ENCODE measurements at regions of chr7 and their contacts with region 1.

Region 1: GRCh38 chr7:95690367-95690947 is 81.9 kb upstream of the DYNC1I1 start:
- DNase-seq: peak; percentile 68
- H3K4me3 Mint-ChIP-seq: peak overlapping the region; percentile 13
- H3K27ac Mint-ChIP-seq: peak overlapping the region; percentile 46
- H3K4me1 Mint-ChIP-seq: peaks cover 22% of the 10 kb centered on the region
- H3K27me3 Mint-ChIP-seq: peaks cover 11% of the 10 kb centered on the region
- CTCF ChIP-seq: peak; percentile 69

Region 2: GRCh38 chr7:94442639-94443038 is 1247.8 kb before region 1 on chr7:
- CTCF ChIA-PET with region 1: interaction called, 10 read pairs
- POLR2A ChIA-PET with region 1: no interaction called
- intact Hi-C with region 1: loop called (anchors 5 kb)
- DNase-seq: no peak
- H3K4me3 Mint-ChIP-seq: no peak overlapping the region
- H3K27ac Mint-ChIP-seq: no peak overlapping the region
- H3K4me1 Mint-ChIP-seq: no peaks in the 10 kb centered on the region
- H3K27me3 Mint-ChIP-seq: peaks cover 15% of the 10 kb centered on the region
- CTCF ChIP-seq: no peak

Region 3: GRCh38 chr7:95491634-95492320 is 198.7 kb before region 1 on chr7:
- CTCF ChIA-PET with region 1: interaction called, 72 read pairs
- POLR2A ChIA-PET with region 1: interaction called, 3 read pairs
- intact Hi-C with region 1: no loop called
- DNase-seq: peak; percentile 96
- H3K4me3 Mint-ChIP-seq: no peak overlapping the region
- H3K27ac Mint-ChIP-seq: peak overlapping the region; percentile 23
- H3K4me1 Mint-ChIP-seq: peaks cover 24% of the 10 kb centered on the region
- H3K27me3 Mint-ChIP-seq: no peaks in the 10 kb centered on the region
- CTCF ChIP-seq: no peak

Region 4: DNA sequence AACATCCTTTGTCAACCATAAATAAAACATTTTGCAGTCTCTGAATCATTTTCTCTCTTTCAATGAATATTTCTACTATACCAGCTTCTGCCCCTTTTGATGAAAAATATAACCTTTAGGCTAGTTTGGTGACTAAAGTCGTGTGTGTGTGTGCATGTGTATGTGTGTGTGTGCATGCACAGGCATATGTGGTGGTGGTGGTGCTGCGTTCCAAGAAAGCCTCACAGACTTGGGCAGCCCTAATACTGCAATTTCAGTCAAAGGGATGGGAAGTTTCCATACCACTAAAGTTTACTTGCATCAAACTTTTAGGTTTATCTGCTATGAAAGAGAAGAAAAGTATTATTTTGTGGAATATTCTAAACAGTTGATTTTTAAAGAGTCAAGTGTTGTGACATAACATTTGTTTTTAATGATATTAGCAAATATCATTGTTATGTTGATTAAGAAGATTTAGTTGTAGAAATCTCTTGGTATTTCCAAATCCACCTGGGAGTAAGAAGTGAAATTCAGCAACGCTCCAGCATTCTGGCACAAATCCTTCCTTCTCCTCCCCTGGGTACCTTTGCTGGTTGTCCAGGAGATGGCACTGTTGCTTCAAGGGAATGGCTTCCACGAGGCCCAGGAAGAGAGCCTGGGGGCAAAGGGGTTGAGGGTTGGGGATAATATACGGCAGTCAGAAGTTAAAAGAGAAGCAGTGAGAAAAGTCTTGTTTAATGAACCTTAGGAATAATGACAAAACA is 163.3 kb before region 1 on chr7:
- CTCF ChIA-PET with region 1: interaction called, 1,114 read pairs
- POLR2A ChIA-PET with region 1: interaction called, 54 read pairs
- intact Hi-C with region 1: loop called (anchors 1 kb)
- DNase-seq: peak; percentile 83
- H3K4me3 Mint-ChIP-seq: no peak overlapping the region
- H3K27ac Mint-ChIP-seq: no peak overlapping the region
- H3K4me1 Mint-ChIP-seq: peaks cover 6% of the 10 kb centered on the region
- H3K27me3 Mint-ChIP-seq: peaks cover 38% of the 10 kb centered on the region
- CTCF ChIP-seq: peak; percentile 80

Region 5: DNA sequence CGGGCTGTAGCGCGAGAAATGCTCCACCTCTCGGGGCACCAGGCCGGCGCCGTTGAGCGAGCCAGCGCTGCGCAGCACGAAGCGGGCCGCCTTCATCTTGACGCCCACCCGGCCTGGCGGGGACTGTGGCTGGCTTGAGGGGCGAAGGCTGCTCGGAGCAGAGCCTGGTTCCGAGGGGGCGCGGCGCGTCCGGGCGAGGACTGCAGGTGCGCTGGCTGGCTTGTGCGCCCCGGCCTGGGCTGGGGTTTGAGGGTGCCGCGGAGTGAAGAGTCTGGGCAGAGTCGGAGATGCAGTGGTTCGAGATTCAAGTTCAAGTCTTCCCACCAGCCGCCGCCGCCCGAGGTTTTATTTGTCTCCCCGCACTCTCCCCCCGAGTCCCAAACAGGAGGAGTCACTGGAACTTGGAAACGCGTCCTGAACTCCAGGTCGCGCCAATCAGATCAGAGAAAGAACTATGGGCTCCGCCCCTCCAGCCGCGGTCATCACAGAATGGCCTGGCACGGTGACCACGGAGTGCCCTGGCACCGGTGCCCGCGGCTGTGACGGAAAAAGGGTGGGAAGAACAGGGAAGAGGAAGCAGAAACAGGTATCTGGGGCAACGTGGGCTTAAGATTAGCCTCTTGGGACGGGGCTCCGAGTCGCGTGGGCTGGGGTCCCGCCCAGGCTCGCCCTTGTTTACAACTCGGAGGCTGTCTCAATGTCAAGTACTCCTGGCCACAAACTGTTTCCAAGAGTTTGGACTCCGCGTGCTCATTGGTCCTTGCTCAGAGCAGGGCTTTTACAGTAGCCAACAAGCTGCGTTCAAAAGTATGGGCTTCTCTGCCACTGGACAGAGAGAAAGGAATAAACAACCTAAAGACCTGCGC is 94.0 kb before region 1 on chr7 and contains the start of gene PDK4:
- CTCF ChIA-PET with region 1: interaction called, 73 read pairs
- POLR2A ChIA-PET with region 1: interaction called, 4 read pairs
- intact Hi-C with region 1: no loop called
- DNase-seq: peak; percentile 89
- H3K4me3 Mint-ChIP-seq: peak within 1 kb of the TSS; percentile 72
- H3K27ac Mint-ChIP-seq: peak within 1 kb of the TSS; percentile 84
- H3K4me1 Mint-ChIP-seq: peaks cover 13% of the 10 kb centered on the region
- H3K27me3 Mint-ChIP-seq: no peaks in the 10 kb centered on the region
- CTCF ChIP-seq: no peak
- total RNA-seq, gene PDK4: 1.2 and 1.3 TPM in 2 replicates

Region 6: DNA sequence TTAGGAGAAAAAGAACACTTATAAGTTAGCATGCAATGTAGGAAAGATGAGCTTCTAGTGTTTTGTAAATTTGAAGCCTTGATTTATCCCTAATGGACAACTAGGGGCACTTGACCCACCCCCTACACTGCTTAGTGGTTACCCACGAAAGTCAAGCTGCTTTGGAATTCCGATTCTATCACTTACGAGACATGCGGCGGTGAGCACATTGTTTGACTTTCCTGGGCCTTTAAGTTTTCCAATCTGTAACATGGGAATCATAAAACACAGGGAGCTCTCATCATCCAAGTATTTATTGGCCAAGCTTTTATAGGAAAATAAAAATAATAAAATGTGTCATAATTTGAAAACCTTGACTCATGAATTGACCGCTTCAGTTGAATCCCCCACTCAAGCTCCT is 15.4 kb before region 1 on chr7:
- CTCF ChIA-PET with region 1: interaction called, 24 read pairs
- POLR2A ChIA-PET with region 1: no interaction called
- intact Hi-C with region 1: no loop called
- DNase-seq: no peak
- H3K4me3 Mint-ChIP-seq: no peak overlapping the region
- H3K27ac Mint-ChIP-seq: no peak overlapping the region
- H3K4me1 Mint-ChIP-seq: no peaks in the 10 kb centered on the region
- H3K27me3 Mint-ChIP-seq: no peaks in the 10 kb centered on the region
- CTCF ChIP-seq: no peak

Measured in MCF 10A (cell line).